Activated CD4-positive, alpha-beta T cell treated with anti-CD3 and anti-CD28 coated beads for 36 hours (primary cell): ENCODE measurements at regions of chr11 and their contacts with region 1.

Region 1: DNA sequence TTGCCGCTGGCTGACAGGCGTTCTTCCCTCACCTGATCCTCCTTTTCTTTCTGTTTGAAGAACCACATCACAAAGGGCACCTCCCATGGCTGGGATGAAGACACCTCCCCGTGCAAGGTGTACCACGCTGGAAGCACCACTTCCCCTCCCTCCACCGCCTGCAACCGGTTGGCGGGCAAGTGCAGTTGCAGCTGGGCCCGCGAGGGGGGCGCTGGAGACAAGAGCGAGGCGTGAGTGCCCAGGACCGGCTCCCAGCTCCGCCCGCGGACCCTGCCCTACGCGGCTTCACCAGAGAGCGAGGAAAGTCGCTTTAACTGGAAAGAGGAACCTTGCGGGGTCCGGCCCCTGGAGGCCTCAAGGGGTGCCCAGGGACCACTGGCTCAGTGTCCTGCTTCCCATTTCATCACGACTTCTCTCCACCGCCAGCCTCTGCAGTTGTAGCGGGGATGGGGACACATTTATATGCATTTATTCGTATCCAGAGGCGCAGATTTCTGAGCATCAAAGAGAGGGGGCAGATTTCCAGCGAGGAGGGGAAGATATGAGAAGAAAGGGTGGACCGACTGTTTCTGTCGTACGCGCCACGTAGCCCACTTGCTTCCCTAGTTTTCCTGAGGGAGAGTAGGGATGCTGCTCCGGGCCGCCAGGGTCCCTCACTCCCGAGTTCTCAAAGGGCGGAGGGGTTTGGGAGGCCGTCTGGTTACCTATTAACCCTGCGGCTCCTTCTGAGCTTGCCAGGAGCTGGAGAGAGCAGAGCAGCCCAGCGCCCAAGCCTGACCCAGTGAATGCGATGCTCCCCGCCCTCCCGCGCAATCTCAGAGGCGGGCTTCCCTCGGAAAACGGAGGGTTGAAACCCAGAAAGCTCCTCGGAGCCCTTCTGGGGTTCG is 3.5 kb downstream of the ESAM start:
- DNase-seq: peak; percentile 88
- ATAC-seq: peak; percentile 83
- H3K4me3 Mint-ChIP-seq: peak overlapping the region; percentile 57
- H3K27ac Mint-ChIP-seq: no peak overlapping the region
- H3K4me1 Mint-ChIP-seq: peaks cover 21% of the 10 kb centered on the region
- H3K27me3 Mint-ChIP-seq: peaks cover 46% of the 10 kb centered on the region

Region 2: GRCh38 chr11:123859731-123860130 is 898.8 kb before region 1 on chr11:
- CTCF ChIA-PET with region 1: no interaction called
- POLR2A ChIA-PET with region 1: no interaction called
- intact Hi-C with region 1: no loop called
- DNase-seq: no peak
- ATAC-seq: no peak
- H3K4me3 Mint-ChIP-seq: no peak overlapping the region
- H3K27ac Mint-ChIP-seq: no peak overlapping the region
- H3K4me1 Mint-ChIP-seq: no peaks in the 10 kb centered on the region
- H3K27me3 Mint-ChIP-seq: peaks cover 3% of the 10 kb centered on the region

Region 3: GRCh38 chr11:124543145-124543544 is 215.4 kb before region 1 on chr11:
- CTCF ChIA-PET with region 1: no interaction called
- POLR2A ChIA-PET with region 1: no interaction called
- intact Hi-C with region 1: no loop called
- DNase-seq: no peak
- ATAC-seq: no peak
- H3K4me3 Mint-ChIP-seq: no peak overlapping the region
- H3K27ac Mint-ChIP-seq: no peak overlapping the region
- H3K4me1 Mint-ChIP-seq: no peaks in the 10 kb centered on the region
- H3K27me3 Mint-ChIP-seq: peaks cover 22% of the 10 kb centered on the region

Region 4: GRCh38 chr11:124622531-124623451 is 135.8 kb before region 1 on chr11 and contains the start of gene TBRG1:
- CTCF ChIA-PET with region 1: no interaction called
- POLR2A ChIA-PET with region 1: interaction called, 3 read pairs
- intact Hi-C with region 1: loop called in 1 of 2 experiments (anchors 2 kb)
- DNase-seq: peak; percentile 87
- ATAC-seq: peak; percentile 99
- H3K4me3 Mint-ChIP-seq: peak within 1 kb of the TSS; percentile 93
- H3K27ac Mint-ChIP-seq: peak within 1 kb of the TSS; percentile 95
- H3K4me1 Mint-ChIP-seq: peaks cover 22% of the 10 kb centered on the region
- H3K27me3 Mint-ChIP-seq: peaks cover 5% of the 10 kb centered on the region
- total RNA-seq, gene TBRG1: 29.6 to 40.6 TPM

Region 5: GRCh38 chr11:124739479-124740276 is 18.9 kb before region 1 on chr11 and contains the start of gene NRGN:
- CTCF ChIA-PET with region 1: interaction called, 79 read pairs
- POLR2A ChIA-PET with region 1: interaction called, 3 read pairs
- intact Hi-C with region 1: loop called in 1 of 2 experiments (anchors 1 kb)
- DNase-seq: peak; percentile 93
- ATAC-seq: peak; percentile 95
- H3K4me3 Mint-ChIP-seq: peak within 1 kb of the TSS; percentile 76
- H3K27ac Mint-ChIP-seq: peak within 1 kb of the TSS; percentile 17
- H3K4me1 Mint-ChIP-seq: peaks cover 9% of the 10 kb centered on the region
- H3K27me3 Mint-ChIP-seq: peaks cover 2% of the 10 kb centered on the region
- total RNA-seq, gene NRGN: 13.5 to 18.1 TPM

Region 6: DNA sequence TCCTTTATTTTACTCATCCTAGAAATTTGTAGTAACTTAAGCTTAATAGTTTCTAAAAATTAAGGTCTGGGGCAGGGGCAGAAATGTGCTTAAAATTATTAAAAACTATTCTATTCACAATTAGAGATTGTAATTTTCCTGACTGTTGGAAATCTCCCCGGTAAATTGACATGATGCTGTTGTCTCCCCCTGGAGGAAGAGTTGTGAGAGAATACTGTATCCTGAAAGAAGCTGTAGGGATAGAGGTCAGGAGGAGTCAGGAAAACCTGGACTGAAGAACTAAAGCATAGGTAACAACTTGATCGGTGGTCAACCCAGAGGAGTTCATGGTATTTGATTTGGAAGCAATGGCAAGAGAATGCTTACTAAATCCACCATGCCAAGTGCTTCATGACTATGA is 19.7 kb after region 1 on chr11:
- CTCF ChIA-PET with region 1: interaction called, 11 read pairs
- POLR2A ChIA-PET with region 1: no interaction called
- intact Hi-C with region 1: no loop called
- DNase-seq: no peak
- ATAC-seq: no peak
- H3K4me3 Mint-ChIP-seq: no peak overlapping the region
- H3K27ac Mint-ChIP-seq: no peak overlapping the region
- H3K4me1 Mint-ChIP-seq: peaks cover 15% of the 10 kb centered on the region
- H3K27me3 Mint-ChIP-seq: no peaks in the 10 kb centered on the region

Region 7: GRCh38 chr11:124800226-124800929 is 41.8 kb after region 1 on chr11 and contains the start of gene MSANTD2:
- CTCF ChIA-PET with region 1: interaction called, 25 read pairs
- POLR2A ChIA-PET with region 1: no interaction called
- intact Hi-C with region 1: loop called in 1 of 2 experiments (anchors 1 kb)
- DNase-seq: peak; percentile 88
- ATAC-seq: peak; percentile 89
- H3K4me3 Mint-ChIP-seq: peak within 1 kb of the TSS; percentile 83
- H3K27ac Mint-ChIP-seq: peak within 1 kb of the TSS; percentile 95
- H3K4me1 Mint-ChIP-seq: peaks cover 36% of the 10 kb centered on the region
- H3K27me3 Mint-ChIP-seq: no peaks in the 10 kb centered on the region
- total RNA-seq, gene MSANTD2: 6.9 to 8.6 TPM

Region 8: DNA sequence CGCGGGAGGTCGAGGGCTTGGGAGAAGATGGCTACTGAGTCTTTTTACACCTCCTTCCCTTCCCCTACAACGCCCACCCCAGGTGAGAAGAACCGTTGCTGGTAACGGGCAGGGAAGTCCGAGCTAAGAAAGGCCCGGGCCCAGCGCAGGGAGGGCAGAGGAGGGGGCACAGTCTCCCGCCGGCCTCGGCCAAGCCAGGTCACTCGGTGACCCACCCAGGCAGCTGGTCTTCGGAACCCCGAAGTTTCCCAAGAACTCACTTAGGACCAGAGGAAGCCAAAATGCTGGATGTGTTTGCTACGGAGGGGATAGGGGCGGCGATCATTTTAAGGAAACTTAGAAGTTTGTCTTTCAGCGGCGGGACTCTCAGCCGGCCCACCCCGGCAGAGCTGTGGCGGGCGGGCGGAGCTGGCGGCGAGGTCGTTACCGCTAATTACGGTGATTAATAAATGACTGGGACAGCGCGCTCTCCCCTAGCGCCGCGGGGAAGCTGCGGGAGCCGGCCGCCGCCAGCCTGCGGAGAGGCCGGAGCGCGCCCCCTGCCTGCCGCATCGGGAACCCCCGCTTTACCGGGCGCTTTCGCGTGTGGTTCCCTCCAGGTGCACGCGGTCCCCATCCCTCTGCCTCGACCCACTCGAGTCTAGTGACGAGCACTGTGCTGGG is 107.5 kb after region 1 on chr11:
- CTCF ChIA-PET with region 1: interaction called, 3 read pairs
- POLR2A ChIA-PET with region 1: interaction called, 3 read pairs
- intact Hi-C with region 1: loop called in 1 of 2 experiments (anchors 1 kb)
- DNase-seq: peak; percentile 77
- ATAC-seq: peak; percentile 60
- H3K4me3 Mint-ChIP-seq: no peak overlapping the region
- H3K27ac Mint-ChIP-seq: no peak overlapping the region
- H3K4me1 Mint-ChIP-seq: peaks cover 31% of the 10 kb centered on the region
- H3K27me3 Mint-ChIP-seq: peaks cover 81% of the 10 kb centered on the region

Region 9: GRCh38 chr11:125123947-125124617 is 365.5 kb after region 1 on chr11:
- CTCF ChIA-PET with region 1: no interaction called
- POLR2A ChIA-PET with region 1: interaction called, 10 read pairs
- intact Hi-C with region 1: no loop called
- DNase-seq: peak; percentile 68
- ATAC-seq: peak; percentile 87
- H3K4me3 Mint-ChIP-seq: no peak overlapping the region
- H3K27ac Mint-ChIP-seq: no peak overlapping the region
- H3K4me1 Mint-ChIP-seq: no peaks in the 10 kb centered on the region
- H3K27me3 Mint-ChIP-seq: peaks cover 22% of the 10 kb centered on the region